A549 (cell line): ENCODE measurements at regions of chr4 and their contacts with region 1.

Region 1: DNA sequence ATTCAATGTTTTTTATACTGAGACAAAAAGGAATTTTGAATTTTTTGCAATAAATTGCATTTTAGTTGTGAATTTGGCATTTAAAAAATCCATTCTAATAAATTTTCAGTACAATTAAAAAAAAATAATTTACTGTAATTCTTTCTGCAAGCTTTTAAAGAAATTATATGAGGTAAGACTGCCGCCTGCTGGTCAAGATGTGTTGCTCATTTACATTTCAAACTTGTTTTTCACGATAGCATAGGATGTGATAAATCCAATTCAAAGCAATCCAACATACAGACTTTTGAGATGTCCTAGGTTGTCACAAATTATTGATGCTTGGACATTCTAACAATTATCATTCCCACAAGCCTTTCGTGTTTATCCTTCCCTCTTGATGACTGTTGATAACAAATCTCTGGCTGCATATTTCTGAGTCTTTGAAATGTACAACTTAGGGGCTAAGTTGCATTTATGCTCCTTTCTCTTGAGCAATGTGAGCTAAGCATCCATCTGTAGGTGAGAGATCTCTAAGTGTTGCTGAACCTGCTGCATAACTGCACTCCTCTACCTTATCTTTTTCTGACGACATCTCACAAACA is 21.7 kb upstream of the MFAP3L start:
- DNase-seq: peak; percentile 8 to 64
- ATAC-seq: peak in 1 of 2 experiments; percentile 48; a peak in 2 of 6 replicates
- H3K4me3 ChIP-seq: no peak overlapping the region
- H3K27ac ChIP-seq: no peak overlapping the region
- H3K4me1 ChIP-seq: no peaks in the 10 kb centered on the region
- CTCF ChIP-seq: peak; percentile 72
- EP300 ChIP-seq: no peak
- POLR2A ChIP-seq: no peak
- RAD21 ChIP-seq: peak; percentile 79 to 84

Region 2: DNA sequence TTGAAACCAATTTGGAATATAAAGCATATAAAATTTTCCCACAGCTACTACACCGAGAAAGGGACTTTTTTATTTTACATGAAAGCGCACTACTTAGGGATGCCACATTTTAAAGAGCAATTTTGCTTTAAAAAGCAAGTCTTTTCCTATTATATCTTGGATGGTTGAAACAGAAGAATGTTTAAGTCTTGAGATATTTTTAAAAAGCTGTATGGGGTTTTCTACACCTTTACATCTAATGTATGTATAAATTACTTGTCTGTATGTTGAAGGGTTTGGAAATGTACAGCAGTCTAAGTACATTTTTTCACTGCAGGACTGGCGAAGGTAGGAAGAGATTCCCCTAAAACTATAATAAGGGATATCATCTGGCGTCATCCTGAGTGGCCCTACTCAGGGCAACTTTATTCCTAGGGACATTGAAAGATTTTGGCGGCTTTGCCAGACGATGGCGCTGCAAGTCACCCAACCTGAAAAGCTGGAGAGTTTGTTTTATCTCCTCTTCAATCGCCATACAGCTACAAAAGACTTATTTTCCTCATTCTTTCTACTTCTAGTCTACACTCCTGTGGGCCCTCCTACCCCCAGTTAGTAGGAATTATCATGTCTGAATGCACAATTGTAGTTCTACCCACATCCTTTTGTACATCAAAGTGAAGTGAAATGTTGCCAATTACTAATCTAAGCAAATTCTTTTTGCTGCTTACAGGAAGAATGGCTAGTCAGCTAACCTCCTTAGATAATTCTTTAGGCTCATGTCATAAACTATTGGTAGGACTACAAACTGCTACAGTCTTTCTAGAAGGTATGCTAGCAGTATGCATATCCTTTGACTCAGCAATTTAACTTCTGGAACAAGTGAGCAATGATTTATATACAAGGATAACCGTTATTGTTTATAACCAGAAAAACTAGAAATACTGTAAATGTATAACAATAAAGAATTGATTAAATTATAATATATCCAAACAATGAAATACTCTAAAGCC is 434.7 kb before region 1 on chr4:
- CTCF ChIA-PET with region 1: interaction called, 10 read pairs
- POLR2A ChIA-PET with region 1: no interaction called
- DNase-seq: peak; percentile 44 to 77
- ATAC-seq: peak; percentile 69 to 83
- H3K4me3 ChIP-seq: peak overlapping the region; percentile 78
- H3K27ac ChIP-seq: peak overlapping the region; percentile 65 to 97
- H3K4me1 ChIP-seq: peaks cover 12% of the 10 kb centered on the region; the same call in 1 of the 3 replicates
- CTCF ChIP-seq: peak; percentile 76
- EP300 ChIP-seq: no peak
- POLR2A ChIP-seq: no peak
- RAD21 ChIP-seq: peak; percentile 64 to 73

Region 3: GRCh38 chr4:169791527-169792156 is 256.2 kb before region 1 on chr4:
- CTCF ChIA-PET with region 1: interaction called, 13 read pairs
- POLR2A ChIA-PET with region 1: no interaction called
- DNase-seq: peak; percentile 37 to 69
- ATAC-seq: peak; percentile 86 to 92
- H3K4me3 ChIP-seq: peak overlapping the region; percentile 41
- H3K27ac ChIP-seq: peak overlapping the region; percentile 57 to 86; a peak in 5 of 6 replicates
- H3K4me1 ChIP-seq: peaks cover 19% of the 10 kb centered on the region
- CTCF ChIP-seq: peak; percentile 58
- EP300 ChIP-seq: no peak
- POLR2A ChIP-seq: no peak
- RAD21 ChIP-seq: peak; percentile 43 to 56; a peak in 4 of 5 replicates

Region 4: GRCh38 chr4:170027181-170027829 is 20.6 kb before region 1 on chr4:
- CTCF ChIA-PET with region 1: interaction called, 12 read pairs
- POLR2A ChIA-PET with region 1: no interaction called
- DNase-seq: peak; percentile 76 to 93
- ATAC-seq: peak; percentile 56 to 90
- H3K4me3 ChIP-seq: peak overlapping the region; percentile 98
- H3K27ac ChIP-seq: peak overlapping the region; percentile 84 to 100
- H3K4me1 ChIP-seq: no peaks in the 10 kb centered on the region
- CTCF ChIP-seq: no peak
- EP300 ChIP-seq: no peak
- POLR2A ChIP-seq: no peak
- RAD21 ChIP-seq: no peak